GM10248 (cell line): ENCODE measurements at regions of chr3 and their contacts with region 1.

Region 1: GRCh38 chr3:165868088-165868487 is 30.9 kb upstream of the BCHE start:
- DNase-seq: no peak
- CTCF ChIP-seq: no peak

Region 2: GRCh38 chr3:165854696-165855095 is 13.4 kb before region 1 on chr3:
- CTCF ChIA-PET with region 1: interaction called, 17 read pairs
- POLR2A ChIA-PET with region 1: no interaction called
- DNase-seq: peak; percentile 14
- CTCF ChIP-seq: peak; percentile 53